Transverse colon (tissue), 4 donors: ENCODE measurements at regions of chr9 and their contacts with region 1.

Region 1: GRCh38 chr9:118624608-118625007 is 744.6 kb downstream of the BRINP1 start:
- DNase-seq: no peak
- H3K4me3 ChIP-seq: no peak overlapping the region
- H3K27ac ChIP-seq: no peak overlapping the region
- H3K4me1 ChIP-seq: no peaks in the 10 kb centered on the region
- H3K27me3 ChIP-seq: no peaks in the 10 kb centered on the region
- CTCF ChIP-seq: no peak
- EP300 ChIP-seq: no peak
- POLR2A ChIP-seq: no peak

Region 2: DNA sequence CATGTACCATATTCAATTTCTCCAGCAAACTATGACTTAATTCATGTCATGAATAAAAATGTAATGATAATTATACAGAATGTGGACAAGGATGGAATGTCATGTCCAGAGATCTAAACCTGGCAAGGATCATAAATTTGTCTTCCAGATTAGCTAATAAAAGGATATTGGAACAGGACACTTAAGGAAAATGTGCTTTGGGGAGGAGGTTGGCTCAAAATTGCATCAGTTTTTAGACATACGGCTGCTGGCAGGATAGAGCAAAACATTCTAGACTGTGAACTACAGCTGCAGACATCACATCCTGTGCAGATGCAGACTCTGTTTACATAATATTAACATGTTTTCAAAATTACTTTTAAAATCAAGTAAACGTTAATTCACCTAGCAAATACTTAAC is 672.0 kb before region 1 on chr9:
- in situ Hi-C with region 1: no loop called
- intact Hi-C with region 1: no loop called
- DNase-seq: no peak
- H3K4me3 ChIP-seq: no peak overlapping the region
- H3K27ac ChIP-seq: no peak overlapping the region
- H3K4me1 ChIP-seq: no peaks in the 10 kb centered on the region
- H3K27me3 ChIP-seq: no peaks in the 10 kb centered on the region
- CTCF ChIP-seq: no peak
- EP300 ChIP-seq: no peak
- POLR2A ChIP-seq: no peak

Region 3: DNA sequence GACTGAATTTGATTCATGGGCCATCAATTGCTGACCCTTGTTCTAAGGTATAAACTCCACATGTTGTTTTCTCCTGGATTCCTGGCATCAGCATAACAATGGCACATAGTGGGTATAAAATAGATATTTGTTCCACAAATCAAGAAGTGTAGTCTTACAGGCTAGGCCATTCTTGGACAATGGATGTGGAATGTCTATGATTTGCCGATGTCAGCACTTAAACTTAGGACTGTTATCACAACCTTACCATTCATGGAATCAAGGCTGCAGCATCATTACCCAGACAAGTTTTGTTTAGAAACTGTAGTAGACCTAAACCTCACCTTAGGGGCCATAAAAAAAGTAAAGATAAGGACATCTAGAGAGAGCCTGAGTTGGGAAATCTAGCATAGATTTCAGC is 64.7 kb after region 1 on chr9:
- in situ Hi-C with region 1: no loop called
- intact Hi-C with region 1: loop called (anchors 2 kb)
- DNase-seq: no peak
- H3K4me3 ChIP-seq: no peak overlapping the region
- H3K27ac ChIP-seq: no peak overlapping the region
- H3K4me1 ChIP-seq: no peaks in the 10 kb centered on the region
- H3K27me3 ChIP-seq: no peaks in the 10 kb centered on the region
- CTCF ChIP-seq: no peak
- EP300 ChIP-seq: no peak
- POLR2A ChIP-seq: no peak